ENCODE measurements at regions of chr5 and their contacts with region 1.

Region 1: DNA sequence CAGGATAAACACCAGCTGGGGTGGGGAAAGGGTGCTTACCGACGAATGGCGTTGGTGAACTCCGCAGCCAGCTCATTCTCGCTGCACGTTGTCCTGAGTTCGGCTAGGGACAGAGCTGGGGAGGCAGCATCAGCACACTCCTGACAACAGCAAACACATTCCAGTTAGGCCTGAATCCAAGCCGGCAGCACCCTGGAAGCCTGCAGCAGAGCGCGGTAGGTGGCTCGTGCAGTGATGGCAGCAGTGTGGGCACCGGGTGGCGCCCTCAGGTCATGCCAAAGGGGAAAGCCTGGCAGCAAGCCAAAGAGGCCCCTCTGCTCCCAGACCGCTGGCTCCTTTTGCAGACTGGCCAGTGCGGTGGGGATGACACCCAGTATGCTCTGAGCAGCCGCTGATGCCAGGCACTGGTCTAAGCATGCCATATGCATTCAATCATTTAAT is 66.9 kb downstream of the DCP2 start:
- DNase-seq: peak; percentile 82
- ATAC-seq: peak; percentile 90

Region 2: DNA sequence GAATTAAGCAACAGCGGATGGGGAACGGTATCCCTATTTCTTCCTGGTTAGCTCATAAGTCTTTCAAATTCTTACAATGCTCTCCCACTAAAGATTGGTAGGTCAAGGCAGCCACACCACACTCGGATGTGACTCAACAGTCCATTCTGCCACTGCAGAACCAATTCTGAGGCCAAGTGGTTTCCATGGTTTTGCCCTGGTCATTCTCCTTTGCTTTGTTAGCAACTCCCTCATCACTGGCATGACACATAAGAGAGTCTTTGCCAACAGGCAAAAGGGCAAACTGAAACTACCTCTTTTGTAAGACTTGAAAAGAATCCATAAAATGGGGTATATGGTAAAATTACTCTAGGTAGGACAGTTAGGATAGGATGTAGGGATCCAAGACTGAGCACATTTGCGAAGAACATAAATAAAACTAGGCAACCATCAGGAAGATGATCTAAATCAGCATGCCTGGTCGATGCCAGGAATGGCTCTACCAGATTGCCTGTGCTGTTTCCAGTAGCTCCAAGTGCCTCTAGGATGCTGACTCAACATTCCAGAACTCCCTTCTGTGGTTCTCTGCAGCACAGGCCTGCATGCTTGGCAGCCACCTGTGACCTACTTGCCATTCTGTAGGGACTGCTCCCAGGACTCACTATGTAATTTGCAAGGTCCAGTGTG is 38.5 kb after region 1 on chr5:
- intact Hi-C with region 1: loop called (anchors 5 kb)
- DNase-seq: no peak
- ATAC-seq: no peak

Region 3: DNA sequence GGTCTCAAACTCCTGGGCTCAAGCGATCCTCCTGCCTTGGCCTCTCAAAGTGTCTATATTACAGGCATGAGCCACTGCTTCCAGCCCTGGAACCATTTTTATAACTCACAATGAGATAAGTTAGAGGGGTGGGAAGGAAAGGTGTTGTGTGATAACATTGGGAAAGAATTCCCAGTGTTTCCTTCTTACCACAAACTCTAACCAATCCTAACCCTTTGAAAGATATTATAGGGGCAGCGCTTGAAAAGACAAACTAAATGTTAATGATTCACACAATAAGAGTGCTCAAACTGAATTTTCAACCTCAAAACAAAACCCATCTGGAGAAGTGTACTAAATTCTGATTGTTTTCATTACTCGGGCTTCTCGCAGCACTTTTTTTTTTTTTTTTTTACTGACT is 281.5 kb after region 1 on chr5:
- intact Hi-C with region 1: loop called (anchors 5 kb)
- DNase-seq: no peak
- ATAC-seq: no peak

Measured in Right ventricle myocardium inferior (tissue), 1 donor.